ENCODE measurements at regions of chr7 and their contacts with region 1.

Region 1: GRCh38 chr7:116802746-116803152 is 59.6 kb upstream of the CAPZA2 start:
- DNase-seq: peak; percentile 32
- H3K4me3 Mint-ChIP-seq: no peak overlapping the region
- H3K27ac Mint-ChIP-seq: peak overlapping the region; percentile 64
- H3K4me1 Mint-ChIP-seq: peaks cover 16% of the 10 kb centered on the region
- H3K27me3 Mint-ChIP-seq: peaks cover 10% of the 10 kb centered on the region

Region 2: DNA sequence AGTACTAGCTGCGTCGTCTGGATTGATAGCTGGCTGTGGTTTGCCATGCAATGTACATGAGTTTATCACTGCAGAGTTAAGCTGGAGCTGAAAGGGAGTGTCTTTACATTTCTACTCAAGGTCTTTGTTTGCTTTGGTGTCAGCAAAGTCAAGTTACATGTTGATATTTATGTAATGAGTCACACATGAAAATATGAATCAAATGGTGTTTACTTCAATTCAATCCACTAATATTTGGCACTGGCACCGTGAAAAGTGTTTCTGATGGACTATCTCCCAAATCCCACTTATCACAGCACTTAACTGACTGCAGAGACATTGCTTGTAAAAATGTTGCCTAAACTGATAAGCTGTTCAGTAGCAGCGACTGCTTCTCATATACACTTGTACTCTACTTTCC is 1168.1 kb before region 1 on chr7:
- intact Hi-C with region 1: no loop called
- DNase-seq: no peak
- H3K4me3 Mint-ChIP-seq: no peak overlapping the region
- H3K27ac Mint-ChIP-seq: no peak overlapping the region
- H3K4me1 Mint-ChIP-seq: no peaks in the 10 kb centered on the region
- H3K27me3 Mint-ChIP-seq: no peaks in the 10 kb centered on the region

Region 3: DNA sequence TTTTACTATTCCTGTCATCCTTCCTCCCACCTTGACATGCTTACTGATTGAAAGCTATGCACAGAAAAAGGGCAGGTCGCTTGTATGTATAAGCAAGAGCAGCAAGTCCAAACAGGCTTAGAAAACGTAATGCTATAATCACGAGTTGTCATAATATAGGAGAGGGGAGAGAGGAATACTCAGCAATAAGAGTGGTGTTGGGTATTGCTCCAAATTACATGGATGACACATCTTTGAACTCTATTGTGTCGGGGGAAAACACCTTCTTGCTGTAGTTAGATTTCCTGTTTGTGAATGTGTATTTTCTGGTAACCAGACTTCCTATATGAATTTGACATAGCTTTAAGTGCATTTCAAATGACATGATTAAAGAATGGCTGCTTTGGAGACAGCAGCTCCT is 123.2 kb before region 1 on chr7:
- intact Hi-C with region 1: loop called (anchors 1 kb)
- DNase-seq: no peak
- H3K4me3 Mint-ChIP-seq: peak overlapping the region; percentile 12
- H3K27ac Mint-ChIP-seq: no peak overlapping the region
- H3K4me1 Mint-ChIP-seq: peaks cover 15% of the 10 kb centered on the region
- H3K27me3 Mint-ChIP-seq: peaks cover 22% of the 10 kb centered on the region

Region 4: DNA sequence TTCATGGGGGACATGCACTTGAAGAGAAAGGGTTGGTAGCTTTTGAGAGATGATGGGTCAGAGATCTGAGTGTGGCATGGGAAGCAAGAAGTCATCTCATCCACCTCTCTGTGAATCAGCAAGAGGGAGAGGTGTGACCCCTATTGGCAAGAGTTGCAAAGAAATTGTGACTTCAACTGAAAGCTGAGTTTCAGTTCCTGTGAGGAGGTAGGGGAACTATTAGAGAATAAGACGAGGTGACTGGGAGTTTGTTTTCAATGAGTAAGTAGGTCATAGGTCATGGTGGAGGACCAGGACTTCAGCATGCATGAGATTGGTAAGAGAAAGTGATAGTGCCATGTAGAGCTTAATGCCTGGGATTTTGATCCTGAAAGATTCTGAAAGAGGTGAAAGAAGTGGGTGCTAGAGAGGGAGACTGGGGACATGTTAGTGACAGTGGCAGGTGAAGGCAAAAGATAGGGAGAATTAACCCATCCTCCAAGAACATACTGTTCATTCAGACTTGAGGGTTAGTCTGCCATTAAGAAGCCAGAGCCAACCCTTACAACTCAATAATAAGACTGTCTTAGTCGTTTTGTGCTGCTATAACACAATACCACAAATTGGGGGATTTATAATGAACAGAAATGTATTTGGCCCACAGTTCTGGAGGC is 15.8 kb before region 1 on chr7:
- intact Hi-C with region 1: loop called (anchors 1 kb)
- DNase-seq: no peak
- H3K4me3 Mint-ChIP-seq: no peak overlapping the region
- H3K27ac Mint-ChIP-seq: no peak overlapping the region
- H3K4me1 Mint-ChIP-seq: no peaks in the 10 kb centered on the region
- H3K27me3 Mint-ChIP-seq: no peaks in the 10 kb centered on the region

Measured in activated T-helper 1 cell treated with anti-CD3 and anti-CD28 coated beads, Interleukin-12 subunit alpha, Interleukin-12 subunit beta, Interleukin-2, Interleukin-4 antibody, amounts not matched to agents 30 ng/mL and 10 ng/mL and 1 ng/mL, durations not matched to agents 14 hours and 24 hours and 36 hours (primary cell).